PC-9 (cell line): ENCODE measurements at regions of chr12 and their contacts with region 1.

Region 1: DNA sequence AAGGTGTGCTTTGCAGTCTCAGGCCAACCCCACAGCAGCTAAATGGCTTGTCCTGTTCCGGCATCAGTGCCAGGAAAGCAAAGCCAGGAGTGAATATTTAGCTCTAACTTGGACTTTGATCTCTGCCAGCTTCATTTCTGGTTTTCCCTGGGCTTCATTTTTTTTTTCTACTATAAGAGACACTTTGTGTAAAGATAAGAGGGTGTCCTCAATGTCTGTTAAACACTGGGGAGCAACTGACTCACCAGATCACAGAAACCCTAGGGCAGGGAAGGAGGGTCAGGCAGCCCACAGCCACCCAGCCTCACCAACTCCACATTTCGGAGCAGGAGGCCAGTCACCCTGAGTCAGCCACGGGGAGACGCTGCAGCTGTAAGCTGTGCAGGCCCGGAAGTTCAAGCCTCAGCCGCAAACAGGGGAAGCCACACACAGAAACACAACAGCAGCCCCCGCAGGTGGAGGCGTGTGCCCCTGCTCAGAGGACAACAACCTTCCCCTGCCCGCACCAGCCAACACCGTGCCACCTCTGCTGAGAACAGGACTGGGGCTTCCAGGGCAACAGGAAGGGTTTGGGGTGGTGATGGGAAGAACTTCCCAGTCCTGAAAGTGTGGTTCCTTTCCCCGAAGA is 6.3 kb downstream of the TNFRSF1A start:
- DNase-seq: peak; percentile 76
- H3K4me3 ChIP-seq: peak overlapping the region; percentile 49
- H3K27ac ChIP-seq: peak overlapping the region; percentile 95
- H3K4me1 ChIP-seq: peaks cover 82% of the 10 kb centered on the region
- H3K27me3 ChIP-seq: no peaks in the 10 kb centered on the region
- CTCF ChIP-seq: peak; percentile 53; the same call in 1 of the 2 replicates

Region 2: DNA sequence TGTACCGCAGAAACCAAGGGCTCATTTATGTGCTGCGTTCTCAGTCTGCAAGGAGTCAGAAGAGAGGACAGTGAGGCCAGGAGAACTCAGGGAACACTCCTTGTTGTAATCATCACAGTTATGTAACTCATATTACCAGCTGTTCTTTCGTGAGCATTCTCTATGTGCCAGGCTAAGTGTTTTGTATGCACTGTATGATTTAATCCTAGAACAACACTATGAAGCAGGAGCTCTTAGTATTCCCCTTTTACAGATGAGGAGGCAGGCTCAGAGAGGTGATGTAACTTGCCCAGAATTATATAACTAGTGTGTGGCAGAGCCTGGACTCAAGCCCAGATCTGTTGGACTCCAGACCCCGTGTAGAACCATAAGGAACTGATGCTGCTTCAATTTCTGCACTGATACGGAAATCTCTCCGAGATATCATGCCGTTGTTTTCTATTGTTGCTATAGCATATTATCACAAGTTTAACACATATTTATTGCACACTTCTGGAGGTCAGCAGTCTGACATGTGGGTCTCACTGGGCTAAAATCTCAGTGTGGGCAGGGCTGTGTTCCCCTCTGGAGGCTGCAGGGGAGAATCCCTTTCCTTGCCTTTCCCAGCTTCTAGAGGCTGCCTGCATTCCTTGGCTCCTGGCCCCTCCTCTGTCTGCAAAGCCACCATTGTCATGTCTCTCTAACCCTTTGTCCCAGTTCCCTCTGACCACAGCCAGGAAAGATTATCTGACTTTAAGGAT is 151.7 kb before region 1 on chr12:
- CTCF ChIA-PET with region 1: no interaction called
- POLR2A ChIA-PET with region 1: no interaction called
- intact Hi-C with region 1: no loop called
- DNase-seq: no peak
- H3K4me3 ChIP-seq: no peak overlapping the region
- H3K27ac ChIP-seq: no peak overlapping the region
- H3K4me1 ChIP-seq: peaks cover 29% of the 10 kb centered on the region
- H3K27me3 ChIP-seq: no peaks in the 10 kb centered on the region
- CTCF ChIP-seq: no peak

Region 3: DNA sequence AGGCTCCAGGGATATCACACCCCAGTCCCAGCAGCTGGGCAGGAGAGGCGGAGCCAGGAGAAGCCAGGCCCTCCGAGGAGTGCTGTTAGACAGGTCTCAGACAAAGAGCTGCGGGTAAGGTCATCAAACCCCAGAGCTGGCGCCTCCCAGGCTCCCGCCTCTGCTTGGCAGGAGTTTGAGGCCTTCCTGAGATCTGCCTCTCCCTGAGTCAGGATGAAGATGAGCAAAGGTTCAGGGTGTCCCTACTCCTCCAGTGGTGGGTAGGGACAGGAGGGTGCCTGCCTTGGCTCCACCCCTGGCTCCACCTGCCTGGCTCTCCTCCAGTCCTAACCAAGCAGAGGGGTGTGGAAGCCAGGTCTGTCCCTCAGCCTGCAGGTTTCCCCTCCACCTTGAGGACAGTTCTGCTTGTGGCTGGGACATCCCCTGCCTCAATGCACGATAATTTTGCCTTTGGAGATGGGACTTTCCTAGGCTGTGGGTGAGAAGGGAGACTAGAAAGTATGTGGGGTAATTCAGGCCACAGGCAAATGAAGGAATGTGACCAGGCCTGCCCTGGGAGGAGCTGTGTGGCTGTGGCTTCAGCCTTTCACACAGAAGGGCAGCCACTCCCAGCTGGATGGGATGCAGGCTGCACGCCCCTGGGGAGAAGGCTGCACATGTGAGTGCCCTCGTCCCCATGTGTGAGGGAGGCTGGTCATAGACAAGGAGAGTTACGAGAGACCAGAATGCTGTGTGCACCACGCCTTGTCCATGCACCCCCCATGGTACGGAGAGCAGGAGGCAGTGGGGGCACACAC is 22.8 kb before region 1 on chr12:
- CTCF ChIA-PET with region 1: interaction called, 5 read pairs
- POLR2A ChIA-PET with region 1: interaction called, 21 read pairs
- intact Hi-C with region 1: loop called (anchors 1 kb)
- DNase-seq: peak; percentile 96
- H3K4me3 ChIP-seq: peak overlapping the region; percentile 33; the same call in 1 of the 2 replicates
- H3K27ac ChIP-seq: peak overlapping the region; percentile 97
- H3K4me1 ChIP-seq: peaks cover 54% of the 10 kb centered on the region
- H3K27me3 ChIP-seq: no peaks in the 10 kb centered on the region
- CTCF ChIP-seq: no peak

Region 4: DNA sequence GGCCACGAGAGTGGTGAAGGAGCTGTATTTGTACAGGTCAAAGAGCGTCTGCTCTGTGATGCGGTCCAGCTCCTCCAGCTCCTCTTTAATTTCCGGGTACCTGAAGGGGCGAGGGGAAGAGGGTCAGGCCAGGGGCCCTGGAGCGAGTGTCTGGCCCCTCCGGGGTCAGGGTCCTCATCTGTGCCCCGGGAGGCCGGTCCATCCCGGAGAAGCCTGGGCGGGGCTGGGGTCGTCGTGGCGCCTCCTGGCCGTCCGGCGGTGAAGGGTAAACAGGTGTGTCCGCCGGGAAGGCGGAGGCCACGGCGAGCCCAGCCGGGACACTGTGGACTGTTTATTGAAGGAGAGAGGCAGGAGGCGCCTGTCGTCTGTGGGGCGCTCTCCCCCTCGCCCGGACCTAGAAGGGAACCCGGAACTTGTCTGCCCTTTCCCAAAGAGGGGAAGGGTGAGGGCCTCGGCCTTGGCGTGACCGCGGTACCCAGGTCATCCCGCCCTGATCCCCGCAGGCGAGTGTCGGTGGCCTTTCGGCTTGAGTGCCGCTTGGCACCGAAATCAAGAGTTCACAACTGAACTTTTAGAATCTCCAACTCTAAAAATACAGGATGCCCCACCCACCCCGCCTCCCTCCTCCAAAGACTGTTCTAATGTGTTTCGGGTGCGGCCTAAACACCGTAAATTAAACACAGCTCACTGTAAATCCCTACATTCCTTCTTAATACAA is 28.2 kb after region 1 on chr12:
- CTCF ChIA-PET with region 1: interaction called, 4 read pairs
- POLR2A ChIA-PET with region 1: interaction called, 22 read pairs
- intact Hi-C with region 1: loop called (anchors 2 kb)
- DNase-seq: peak; percentile 70 to 82
- H3K4me3 ChIP-seq: peak overlapping the region; percentile 64
- H3K27ac ChIP-seq: peak overlapping the region; percentile 86
- H3K4me1 ChIP-seq: peaks cover 69% of the 10 kb centered on the region
- H3K27me3 ChIP-seq: no peaks in the 10 kb centered on the region
- CTCF ChIP-seq: no peak; the same call in 1 of the 2 replicates

Region 5: GRCh38 chr12:6383572-6384498 is 48.3 kb after region 1 on chr12 and contains the start of gene LTBR:
- CTCF ChIA-PET with region 1: interaction called, 6 read pairs
- POLR2A ChIA-PET with region 1: interaction called, 23 read pairs
- intact Hi-C with region 1: no loop called
- DNase-seq: peak; percentile 88 to 99
- H3K4me3 ChIP-seq: peak within 1 kb of the TSS; percentile 77
- H3K27ac ChIP-seq: peak within 1 kb of the TSS; percentile 69
- H3K4me1 ChIP-seq: peaks cover 29% of the 10 kb centered on the region
- H3K27me3 ChIP-seq: no peaks in the 10 kb centered on the region
- CTCF ChIP-seq: 0 out of 2 replicates have a peak, but pooled peaks have one; percentile 20
- total RNA-seq, gene LTBR: 178 and 185 TPM in 2 replicates

Region 6: DNA sequence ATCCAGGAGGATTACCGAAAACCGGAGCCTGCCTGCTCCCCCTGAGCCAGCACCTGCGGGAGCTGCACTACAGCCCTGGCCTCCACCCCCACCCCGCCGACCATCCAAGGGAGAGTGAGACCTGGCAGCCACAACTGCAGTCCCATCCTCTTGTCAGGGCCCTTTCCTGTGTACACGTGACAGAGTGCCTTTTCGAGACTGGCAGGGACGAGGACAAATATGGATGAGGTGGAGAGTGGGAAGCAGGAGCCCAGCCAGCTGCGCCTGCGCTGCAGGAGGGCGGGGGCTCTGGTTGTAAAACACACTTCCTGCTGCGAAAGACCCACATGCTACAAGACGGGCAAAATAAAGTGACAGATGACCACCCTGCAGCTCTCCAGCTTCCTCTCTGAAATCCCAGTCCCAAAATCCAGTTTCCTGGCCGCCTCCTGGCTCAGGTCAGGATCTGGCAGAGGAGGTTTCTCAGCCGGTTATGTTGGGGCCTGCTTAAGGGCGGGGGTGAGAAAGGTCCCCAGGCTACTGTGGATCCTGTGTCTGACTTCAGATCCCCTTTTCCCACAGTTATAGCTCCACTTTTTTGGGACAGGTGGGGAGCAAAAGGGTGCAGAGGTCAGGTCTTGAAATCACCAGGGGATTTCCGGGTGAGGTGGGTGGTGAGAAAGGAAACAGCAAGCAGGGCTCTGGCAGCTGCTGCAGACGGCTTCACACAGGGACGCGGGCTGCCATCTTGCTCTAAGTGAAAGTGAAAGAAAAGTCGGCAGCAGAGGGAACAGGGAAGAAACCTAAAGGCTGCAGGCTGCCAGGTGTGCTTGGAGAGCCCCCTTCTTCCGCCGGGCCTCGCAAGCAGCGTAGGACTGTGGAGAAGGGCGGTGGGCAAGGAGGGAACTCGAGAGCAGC is 116.0 kb after region 1 on chr12 and contains the start of gene TAPBPL:
- CTCF ChIA-PET with region 1: no interaction called
- POLR2A ChIA-PET with region 1: interaction called, 3 read pairs
- intact Hi-C with region 1: loop called (anchors 2 kb)
- DNase-seq: peak; percentile 70 to 85
- H3K4me3 ChIP-seq: peak within 1 kb of the TSS; percentile 63
- H3K27ac ChIP-seq: peak within 1 kb of the TSS; percentile 52
- H3K4me1 ChIP-seq: peaks cover 13% of the 10 kb centered on the region
- H3K27me3 ChIP-seq: no peaks in the 10 kb centered on the region
- CTCF ChIP-seq: no peak
- total RNA-seq, gene TAPBPL: 26.0 and 27.8 TPM in 2 replicates

Region 7: DNA sequence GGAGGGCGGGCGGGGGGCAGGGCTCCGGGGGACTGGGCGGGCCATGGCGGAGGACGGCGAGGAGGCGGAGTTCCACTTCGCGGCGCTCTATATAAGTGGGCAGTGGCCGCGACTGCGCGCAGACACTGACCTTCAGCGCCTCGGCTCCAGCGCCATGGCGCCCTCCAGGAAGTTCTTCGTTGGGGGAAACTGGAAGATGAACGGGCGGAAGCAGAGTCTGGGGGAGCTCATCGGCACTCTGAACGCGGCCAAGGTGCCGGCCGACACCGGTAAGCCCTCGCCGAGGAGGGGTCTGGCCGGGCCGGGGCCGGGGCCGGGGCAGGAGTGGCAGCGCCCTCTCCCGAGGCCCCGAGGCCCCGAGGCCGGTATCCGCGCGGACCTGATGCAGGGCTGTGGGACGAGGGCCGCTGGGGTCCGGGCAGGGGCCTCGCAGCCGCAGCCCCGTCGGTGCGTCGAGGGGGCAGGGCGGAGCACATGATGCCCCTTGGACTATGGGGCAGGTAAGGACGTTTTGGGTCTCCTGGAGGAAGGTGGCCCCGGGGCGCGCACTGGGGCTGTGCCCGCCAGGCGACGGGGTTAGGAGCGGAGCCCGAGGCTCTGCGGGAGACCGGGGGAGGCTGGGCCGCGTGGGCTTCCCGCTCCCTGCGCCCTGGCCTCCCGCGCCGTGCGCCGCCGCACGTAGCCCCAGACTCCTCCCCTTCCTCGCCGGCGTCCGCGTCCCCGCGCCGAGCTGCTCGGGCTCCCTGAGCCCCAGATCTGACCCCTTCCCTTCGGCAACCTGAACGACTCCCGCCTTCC is 532.0 kb after region 1 on chr12 and contains the start of gene TPI1:
- CTCF ChIA-PET with region 1: no interaction called
- POLR2A ChIA-PET with region 1: interaction called, 20 read pairs
- intact Hi-C with region 1: no loop called
- DNase-seq: peak; percentile 46 to 82
- H3K4me3 ChIP-seq: peak within 1 kb of the TSS; percentile 97
- H3K27ac ChIP-seq: peak within 1 kb of the TSS; percentile 72
- H3K4me1 ChIP-seq: peaks cover 32% of the 10 kb centered on the region
- H3K27me3 ChIP-seq: no peaks in the 10 kb centered on the region
- CTCF ChIP-seq: no peak; the same call in 1 of the 2 replicates
- total RNA-seq, gene TPI1: 1,080 and 1,199 TPM in 2 replicates

Region 8: GRCh38 chr12:6884539-6884938 is 549.0 kb after region 1 on chr12:
- CTCF ChIA-PET with region 1: no interaction called
- POLR2A ChIA-PET with region 1: no interaction called
- intact Hi-C with region 1: no loop called
- DNase-seq: no peak
- H3K4me3 ChIP-seq: no peak overlapping the region
- H3K27ac ChIP-seq: no peak overlapping the region
- H3K4me1 ChIP-seq: 0 out of 2 replicates have a peak, but pooled peaks cover 5% of the 10 kb centered on the region
- H3K27me3 ChIP-seq: no peaks in the 10 kb centered on the region
- CTCF ChIP-seq: no peak